CD8-positive, alpha-beta T cell (primary cell): ENCODE measurements at regions of chr6 and their contacts with region 1.

Region 1: GRCh38 chr6:135514706-135515105 is 17.2 kb upstream of the AHI1 start:
- DNase-seq: no peak
- ATAC-seq: no peak
- H3K4me3 ChIP-seq: no peak overlapping the region
- H3K4me3 Mint-ChIP-seq: no peak overlapping the region
- H3K27ac ChIP-seq: no peak overlapping the region
- H3K27ac Mint-ChIP-seq: no peak overlapping the region
- H3K4me1 ChIP-seq: no peaks in the 10 kb centered on the region
- H3K4me1 Mint-ChIP-seq: no peaks in the 10 kb centered on the region
- H3K27me3 ChIP-seq: no peaks in the 10 kb centered on the region
- H3K27me3 Mint-ChIP-seq: peaks cover 2% of the 10 kb centered on the region
- CTCF ChIP-seq: no peak

Region 2: DNA sequence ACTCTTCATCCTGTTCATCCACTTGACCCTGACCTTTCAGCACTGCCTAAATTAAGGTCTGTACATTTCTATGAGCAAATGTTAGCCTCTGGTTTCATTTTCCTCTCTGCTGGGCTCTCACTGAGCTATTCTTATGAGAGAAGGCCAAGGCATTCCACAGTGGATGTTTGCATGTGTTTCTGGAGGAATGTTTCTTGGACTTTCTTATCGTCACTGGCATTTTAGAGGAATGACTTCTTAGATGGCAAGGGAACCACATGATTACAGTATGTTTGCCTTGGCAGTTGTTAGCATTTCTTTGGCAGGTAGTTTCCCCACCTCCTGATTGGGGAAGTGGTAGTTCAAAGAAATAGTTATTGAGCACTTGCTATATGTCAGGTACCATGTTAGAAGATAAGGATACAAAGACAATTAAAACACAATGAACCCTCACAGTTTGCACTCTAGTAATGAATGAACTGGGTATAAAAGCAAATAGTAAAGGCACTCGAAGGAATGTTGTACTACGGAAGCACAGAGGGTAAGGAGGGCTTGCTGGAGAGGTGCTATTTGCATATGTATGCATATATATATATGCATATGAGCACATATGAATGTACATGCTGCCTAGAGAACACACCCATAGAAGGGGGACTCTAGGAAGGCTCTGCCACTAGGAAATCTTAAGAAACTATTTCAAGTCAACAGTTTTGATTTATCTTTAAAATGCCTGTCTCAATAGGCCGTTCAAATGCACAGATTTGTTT is 1966.1 kb before region 1 on chr6:
- CTCF ChIA-PET with region 1: no interaction called
- POLR2A ChIA-PET with region 1: no interaction called
- intact Hi-C with region 1: loop called in 1 of 2 experiments (anchors 10 kb)
- DNase-seq: no peak
- ATAC-seq: no peak
- H3K4me3 ChIP-seq: no peak overlapping the region
- H3K4me3 Mint-ChIP-seq: no peak overlapping the region
- H3K27ac ChIP-seq: no peak overlapping the region
- H3K27ac Mint-ChIP-seq: no peak overlapping the region
- H3K4me1 ChIP-seq: no peaks in the 10 kb centered on the region
- H3K4me1 Mint-ChIP-seq: no peaks in the 10 kb centered on the region
- H3K27me3 ChIP-seq: no peaks in the 10 kb centered on the region
- H3K27me3 Mint-ChIP-seq: no peaks in the 10 kb centered on the region
- CTCF ChIP-seq: no peak

Region 3: GRCh38 chr6:135270676-135271536 is 243.8 kb before region 1 on chr6:
- CTCF ChIA-PET with region 1: no interaction called
- POLR2A ChIA-PET with region 1: no interaction called
- intact Hi-C with region 1: no loop called
- DNase-seq: no peak
- ATAC-seq: no peak
- H3K4me3 ChIP-seq: no peak overlapping the region
- H3K4me3 Mint-ChIP-seq: no peak overlapping the region
- H3K27ac ChIP-seq: no peak overlapping the region
- H3K27ac Mint-ChIP-seq: no peak overlapping the region
- H3K4me1 ChIP-seq: no peaks in the 10 kb centered on the region
- H3K4me1 Mint-ChIP-seq: no peaks in the 10 kb centered on the region
- H3K27me3 ChIP-seq: no peaks in the 10 kb centered on the region
- H3K27me3 Mint-ChIP-seq: peaks cover 6% of the 10 kb centered on the region
- CTCF ChIP-seq: no peak